AG04450 (cell line): ENCODE measurements at regions of chr1 and their contacts with region 1.

Region 1: DNA sequence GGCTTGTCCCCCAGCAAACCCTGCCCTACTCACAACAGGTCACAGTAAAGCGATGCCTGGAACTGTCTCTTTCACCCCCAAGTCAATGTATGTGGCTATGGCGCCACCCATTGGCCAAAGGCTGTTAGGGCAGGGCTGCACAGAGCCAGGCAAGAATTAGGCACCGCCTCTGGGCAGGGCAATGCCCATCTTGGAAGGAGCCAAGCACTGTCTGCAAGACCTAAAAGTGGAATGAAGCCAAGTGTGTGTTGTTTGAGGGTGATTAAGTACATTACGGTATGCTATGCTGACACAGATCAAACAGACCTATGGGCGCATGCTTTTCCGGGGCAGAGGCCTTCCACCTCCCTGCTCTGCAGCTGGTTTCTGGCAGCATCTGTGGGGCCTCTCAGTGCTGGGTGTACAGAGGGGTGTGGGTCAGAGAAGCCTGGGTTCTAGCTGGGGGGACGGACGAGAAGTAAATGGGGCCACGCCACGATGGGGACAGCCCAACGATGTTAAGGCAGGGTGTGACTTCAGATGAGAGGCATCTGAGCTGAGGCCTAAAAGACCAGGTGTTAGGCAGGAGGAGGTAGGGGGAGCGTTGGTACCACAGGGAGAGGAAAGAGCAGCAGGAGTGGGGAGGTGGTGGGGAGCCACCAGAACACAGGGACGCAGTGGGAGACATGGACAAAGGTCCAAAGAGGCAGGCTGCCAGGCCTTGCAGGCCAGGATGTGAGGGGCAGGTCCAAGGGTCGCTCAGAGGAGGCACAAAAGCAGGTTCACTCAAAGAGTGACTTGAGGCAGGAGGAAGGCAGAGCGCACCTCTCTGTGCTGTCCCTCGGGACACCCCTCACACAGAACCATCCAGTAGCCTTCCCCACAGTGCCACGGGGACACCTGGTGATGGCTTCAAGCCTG is 49.8 kb downstream of the ACOT7 start:
- DNase-seq: peak; percentile 47
- H3K4me3 ChIP-seq: no peak overlapping the region
- H3K27ac ChIP-seq: no peak overlapping the region
- H3K27me3 ChIP-seq: no peaks in the 10 kb centered on the region
- CTCF ChIP-seq: peak; percentile 98

Region 2: GRCh38 chr1:6330410-6330911 is 13.3 kb before region 1 on chr1:
- CTCF ChIA-PET with region 1: interaction called, 14 read pairs
- POLR2A ChIA-PET with region 1: no interaction called
- DNase-seq: peak; percentile 49
- H3K4me3 ChIP-seq: no peak overlapping the region
- H3K27ac ChIP-seq: peak overlapping the region; percentile 83
- H3K27me3 ChIP-seq: no peaks in the 10 kb centered on the region
- CTCF ChIP-seq: no peak

Region 3: GRCh38 chr1:6401673-6402072 is 57.9 kb after region 1 on chr1:
- CTCF ChIA-PET with region 1: interaction called, 36 read pairs
- POLR2A ChIA-PET with region 1: no interaction called
- DNase-seq: no peak
- H3K4me3 ChIP-seq: no peak overlapping the region
- H3K27ac ChIP-seq: no peak overlapping the region
- H3K27me3 ChIP-seq: peaks cover 3% of the 10 kb centered on the region
- CTCF ChIP-seq: no peak